Endothelial cell of umbilical vein (primary cell): ENCODE measurements at regions of chr3 and their contacts with region 1.

Region 1: DNA sequence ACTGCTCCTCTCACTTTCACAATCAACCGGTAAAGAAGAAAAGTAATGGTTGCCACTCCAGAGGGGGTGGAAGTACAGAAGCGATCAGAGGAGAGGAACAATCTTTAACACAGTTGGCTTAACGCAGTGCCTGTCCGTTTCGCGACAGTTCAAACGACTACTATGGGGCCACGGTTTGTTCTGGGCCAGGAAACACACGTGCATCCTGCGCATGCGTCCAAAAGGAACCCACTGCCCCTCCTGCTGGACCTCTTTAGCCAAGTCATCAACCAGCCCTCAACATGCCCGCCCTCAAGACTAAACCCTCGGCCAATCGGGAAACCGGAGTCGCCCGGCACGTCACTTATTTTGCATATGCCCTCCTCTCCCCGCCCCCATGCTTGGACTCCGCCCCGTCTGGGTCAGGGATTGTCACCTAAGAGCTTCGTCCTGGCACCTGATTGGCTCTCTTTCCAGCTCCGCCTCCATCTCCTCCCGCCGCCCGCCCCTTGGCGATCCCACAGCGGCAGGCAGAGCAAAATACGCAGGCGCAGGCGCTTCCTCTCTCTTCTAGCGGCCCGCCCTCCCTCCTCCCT is 345 bp upstream of the CDV3 start:
- DNase-seq: peak; percentile 100
- H3K4me3 ChIP-seq: peak overlapping the region in 2 of 3 experiments; percentile 5 to 97
- H3K27ac ChIP-seq: peak overlapping the region; percentile 77
- H3K4me1 ChIP-seq: peaks cover 67% of the 10 kb centered on the region
- H3K27me3 ChIP-seq: no peaks in the 10 kb centered on the region
- CTCF ChIP-seq: peak in 1 of 2 donors; percentile 29
- POLR2A ChIP-seq: peak; percentile 77

Region 2: GRCh38 chr3:133301194-133301593 is 271.9 kb before region 1 on chr3:
- CTCF ChIA-PET with region 1: no interaction called
- POLR2A ChIA-PET with region 1: no interaction called
- dilution Hi-C with region 1: no loop called
- intact Hi-C with region 1: loop called (anchors 5 kb)
- DNase-seq: peak; percentile 76
- H3K4me3 ChIP-seq: peak overlapping the region in 2 of 3 experiments; percentile 3 to 30
- H3K27ac ChIP-seq: peak overlapping the region; percentile 14
- H3K4me1 ChIP-seq: peaks cover 38% of the 10 kb centered on the region
- H3K27me3 ChIP-seq: no peaks in the 10 kb centered on the region
- CTCF ChIP-seq: no peak
- POLR2A ChIP-seq: no peak

Region 3: GRCh38 chr3:133487920-133488540 is 85.1 kb before region 1 on chr3:
- CTCF ChIA-PET with region 1: interaction called, 224 read pairs
- POLR2A ChIA-PET with region 1: interaction called, 3 read pairs
- dilution Hi-C with region 1: no loop called
- intact Hi-C with region 1: loop called (anchors 1 kb)
- DNase-seq: peak; percentile 37
- H3K4me3 ChIP-seq: no peak overlapping the region
- H3K27ac ChIP-seq: no peak overlapping the region
- H3K4me1 ChIP-seq: no peaks in the 10 kb centered on the region
- H3K27me3 ChIP-seq: no peaks in the 10 kb centered on the region
- CTCF ChIP-seq: peak; percentile 53 to 54
- POLR2A ChIP-seq: no peak

Region 4: DNA sequence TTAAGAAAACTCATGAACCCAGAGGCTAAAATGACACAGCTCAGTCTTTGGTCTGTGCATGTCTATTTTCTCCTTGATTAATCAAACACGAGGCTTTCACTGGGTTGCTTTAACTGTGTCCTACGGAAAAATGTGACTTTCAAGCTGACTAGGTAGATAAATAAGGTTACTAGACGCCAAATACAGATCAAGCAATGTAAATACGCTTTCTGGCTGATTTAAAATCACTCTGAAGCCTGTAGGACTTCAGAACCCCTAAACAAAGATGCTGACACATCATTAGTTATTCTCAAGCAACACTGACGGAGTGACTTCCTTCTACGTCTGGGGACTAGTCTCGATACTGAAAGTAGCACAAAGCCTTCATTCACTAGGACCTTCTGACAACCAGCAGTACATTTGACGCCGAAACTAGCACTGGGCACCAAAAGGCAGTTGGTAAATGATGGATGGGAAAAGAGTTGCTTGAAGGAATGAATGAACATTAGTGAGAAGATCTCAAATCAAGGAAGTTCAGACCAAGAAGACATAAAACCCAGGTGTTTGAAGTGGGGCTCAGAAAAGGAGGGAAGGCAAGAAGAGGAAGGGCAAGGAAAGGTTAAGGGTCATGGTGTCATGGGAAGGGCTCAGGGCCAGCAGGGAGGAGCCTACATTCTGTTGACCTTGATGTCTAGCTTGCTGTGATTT is 66.8 kb before region 1 on chr3:
- CTCF ChIA-PET with region 1: interaction called, 8 read pairs
- POLR2A ChIA-PET with region 1: no interaction called
- dilution Hi-C with region 1: no loop called
- intact Hi-C with region 1: loop called (anchors 1 kb)
- DNase-seq: peak; percentile 75
- H3K4me3 ChIP-seq: peak overlapping the region in 1 of 3 experiments; percentile 46
- H3K27ac ChIP-seq: peak overlapping the region; percentile 82
- H3K4me1 ChIP-seq: peaks cover 31% of the 10 kb centered on the region
- H3K27me3 ChIP-seq: no peaks in the 10 kb centered on the region
- CTCF ChIP-seq: no peak
- POLR2A ChIP-seq: no peak

Region 5: DNA sequence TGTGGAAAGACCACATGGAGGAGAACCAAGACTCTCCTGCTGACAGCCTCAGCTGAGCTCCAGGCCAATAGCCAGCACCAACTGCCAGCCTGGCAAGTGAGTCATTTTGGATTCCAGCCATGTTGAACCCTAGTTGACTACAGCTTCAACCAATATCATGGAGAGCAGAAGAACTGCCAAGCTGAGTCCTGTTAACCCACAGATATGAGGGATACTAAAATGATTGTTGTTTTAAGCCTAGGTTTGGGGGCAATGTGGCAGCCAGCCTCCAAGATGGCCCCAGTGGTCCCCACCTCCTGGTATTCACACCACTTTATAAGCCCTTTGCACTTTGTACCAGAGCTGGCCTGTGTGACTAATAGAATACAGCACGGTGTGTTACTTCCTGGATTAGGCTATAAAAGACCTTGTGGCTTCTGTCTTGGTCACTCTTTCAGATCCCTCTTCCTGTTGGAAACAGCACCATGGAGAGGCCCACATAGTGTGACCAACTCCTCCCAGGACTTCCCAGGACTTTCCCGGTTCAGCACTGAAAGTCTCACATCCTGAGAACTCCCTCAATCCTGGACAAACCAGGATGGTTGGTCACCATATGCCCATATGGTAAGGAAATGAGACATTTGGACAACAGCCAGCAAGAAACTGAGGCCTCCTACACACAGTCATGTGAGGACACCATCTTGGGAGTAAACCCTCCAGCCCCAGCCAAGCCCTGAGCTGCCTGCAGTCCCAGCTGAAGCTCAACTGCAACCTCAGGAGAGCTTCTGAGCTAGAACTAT is 32.1 kb before region 1 on chr3:
- CTCF ChIA-PET with region 1: interaction called, 16 read pairs
- POLR2A ChIA-PET with region 1: interaction called, 6 read pairs
- dilution Hi-C with region 1: no loop called
- intact Hi-C with region 1: loop called (anchors 1 kb)
- DNase-seq: peak; percentile 87
- H3K4me3 ChIP-seq: no peak overlapping the region
- H3K27ac ChIP-seq: peak overlapping the region; percentile 9
- H3K4me1 ChIP-seq: peaks cover 20% of the 10 kb centered on the region
- H3K27me3 ChIP-seq: no peaks in the 10 kb centered on the region
- CTCF ChIP-seq: no peak
- POLR2A ChIP-seq: no peak

Region 6: GRCh38 chr3:133943639-133944141 is 370.5 kb after region 1 on chr3:
- CTCF ChIA-PET with region 1: no interaction called
- POLR2A ChIA-PET with region 1: no interaction called
- dilution Hi-C with region 1: no loop called
- intact Hi-C with region 1: loop called (anchors 10 kb)
- DNase-seq: peak; percentile 87
- H3K4me3 ChIP-seq: no peak overlapping the region
- H3K27ac ChIP-seq: peak overlapping the region; percentile 88
- H3K4me1 ChIP-seq: peaks cover 66% of the 10 kb centered on the region
- H3K27me3 ChIP-seq: no peaks in the 10 kb centered on the region
- CTCF ChIP-seq: no peak
- POLR2A ChIP-seq: peak; percentile 31

Region 7: GRCh38 chr3:134485718-134486576 is 912.8 kb after region 1 on chr3 and contains the starts of genes ANAPC13 and CEP63:
- CTCF ChIA-PET with region 1: no interaction called
- POLR2A ChIA-PET with region 1: no interaction called
- dilution Hi-C with region 1: no loop called
- intact Hi-C with region 1: loop called (anchors 5 kb)
- DNase-seq: peak; percentile 99
- H3K4me3 ChIP-seq: peak within 1 kb of the TSS; percentile 75 to 88 (median 75)
- H3K27ac ChIP-seq: peak within 1 kb of the TSS; percentile 92
- H3K4me1 ChIP-seq: peaks cover 45% of the 10 kb centered on the region
- H3K27me3 ChIP-seq: no peaks in the 10 kb centered on the region
- CTCF ChIP-seq: no peak
- POLR2A ChIP-seq: peak; percentile 82
- total RNA-seq, gene ANAPC13: 50.8 and 58.6 TPM in 2 replicates
- total RNA-seq, gene CEP63: 24.9 and 29.4 TPM in 2 replicates